ENCODE measurements at regions of chr1 and their contacts with region 1.

Region 1: DNA sequence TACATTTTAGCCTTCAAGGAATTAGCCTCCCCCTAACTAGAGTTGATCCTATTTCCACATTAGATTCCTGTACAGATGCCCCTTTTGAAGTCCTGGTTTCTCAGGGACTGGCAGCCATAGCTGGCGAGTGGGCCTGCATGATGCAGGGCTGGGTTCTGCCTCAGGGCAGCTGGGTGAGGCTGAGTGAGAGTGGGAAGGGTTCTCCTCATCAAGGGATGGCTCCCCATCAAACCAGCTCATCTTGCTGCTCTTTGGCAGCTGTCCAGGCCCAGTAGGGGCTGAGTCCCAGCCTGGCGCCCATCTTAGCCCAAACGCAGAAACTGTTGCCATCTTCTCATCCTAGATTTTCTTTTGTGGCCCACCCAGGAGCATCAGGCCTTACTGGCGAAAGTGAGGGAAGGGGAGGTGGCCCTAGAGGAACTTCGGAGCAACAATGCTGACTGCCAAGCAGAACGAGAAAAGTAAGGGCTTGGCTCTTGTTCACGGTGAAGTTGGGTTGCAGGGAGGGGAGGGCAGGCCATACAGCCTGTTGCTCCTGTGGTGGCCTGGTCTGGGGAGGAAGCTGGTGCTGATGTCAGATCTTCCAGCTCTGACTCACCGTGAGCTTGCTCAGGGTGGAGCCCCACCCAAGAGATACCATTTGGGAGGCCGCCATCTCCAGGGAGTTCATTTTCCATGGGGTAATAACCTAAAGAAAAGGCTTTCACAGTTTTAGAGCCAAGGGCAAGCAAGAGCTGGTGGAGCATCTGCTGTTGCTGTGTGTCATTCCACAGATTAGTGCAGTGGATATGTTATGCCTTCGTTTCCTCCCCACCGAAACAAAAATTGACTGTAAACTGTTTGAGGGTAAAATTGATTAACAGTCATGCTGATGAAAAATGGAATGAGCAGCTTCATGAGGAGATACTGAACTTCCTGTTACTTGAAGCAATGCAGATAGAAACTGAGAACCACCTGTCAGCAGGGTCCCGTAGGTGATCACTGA is 34.7 kb downstream of the TUFT1 start:
- DNase-seq: peak; percentile 85 to 87
- H3K4me3 ChIP-seq: 0 out of 2 replicates have a peak overlapping the region, but pooled peaks have one; percentile 3
- H3K27ac ChIP-seq: peak overlapping the region; percentile 66
- H3K4me1 ChIP-seq: peaks cover 72% of the 10 kb centered on the region
- H3K27me3 ChIP-seq: no peaks in the 10 kb centered on the region
- CTCF ChIP-seq: no peak

Region 2: GRCh38 chr1:151539990-151540981 is 34.6 kb before region 1 on chr1 and contains the start of gene TUFT1:
- CTCF ChIA-PET with region 1: interaction called, 3 read pairs
- POLR2A ChIA-PET with region 1: interaction called, 10 read pairs
- intact Hi-C with region 1: no loop called
- DNase-seq: peak; percentile 85 to 95
- H3K4me3 ChIP-seq: peak within 1 kb of the TSS; percentile 92
- H3K27ac ChIP-seq: peak within 1 kb of the TSS; percentile 95
- H3K4me1 ChIP-seq: peaks cover 60% of the 10 kb centered on the region
- H3K27me3 ChIP-seq: no peaks in the 10 kb centered on the region
- CTCF ChIP-seq: no peak
- total RNA-seq, gene TUFT1: 35.3 and 40.2 TPM in 2 replicates

Region 3: GRCh38 chr1:151547119-151547899 is 27.5 kb before region 1 on chr1:
- CTCF ChIA-PET with region 1: no interaction called
- POLR2A ChIA-PET with region 1: interaction called, 4 read pairs
- intact Hi-C with region 1: loop called (anchors 2 kb)
- DNase-seq: peak; percentile 92 to 99
- H3K4me3 ChIP-seq: peak overlapping the region; percentile 24; the same call in 1 of the 2 replicates
- H3K27ac ChIP-seq: peak overlapping the region; percentile 99
- H3K4me1 ChIP-seq: peaks cover 87% of the 10 kb centered on the region
- H3K27me3 ChIP-seq: no peaks in the 10 kb centered on the region
- CTCF ChIP-seq: no peak; the same call in 1 of the 2 replicates

Region 4: GRCh38 chr1:151594143-151594625 is 19.3 kb after region 1 on chr1:
- CTCF ChIA-PET with region 1: interaction called, 12 read pairs
- POLR2A ChIA-PET with region 1: interaction called, 4 read pairs
- intact Hi-C with region 1: no loop called
- DNase-seq: peak; percentile 54 to 82
- H3K4me3 ChIP-seq: no peak overlapping the region
- H3K27ac ChIP-seq: no peak overlapping the region
- H3K4me1 ChIP-seq: peaks cover 30% of the 10 kb centered on the region
- H3K27me3 ChIP-seq: no peaks in the 10 kb centered on the region
- CTCF ChIP-seq: peak; percentile 94

Region 5: GRCh38 chr1:151961833-151962232 is 387.0 kb after region 1 on chr1:
- CTCF ChIA-PET with region 1: no interaction called
- POLR2A ChIA-PET with region 1: no interaction called
- intact Hi-C with region 1: no loop called
- DNase-seq: no peak
- H3K4me3 ChIP-seq: no peak overlapping the region
- H3K27ac ChIP-seq: no peak overlapping the region
- H3K4me1 ChIP-seq: 0 out of 2 replicates have a peak, but pooled peaks cover 5% of the 10 kb centered on the region
- H3K27me3 ChIP-seq: no peaks in the 10 kb centered on the region
- CTCF ChIP-seq: no peak

Measured in PC-9 (cell line).